GM12878 (cell line): ENCODE measurements at regions of chr3 and their contacts with region 1.

Region 1: GRCh38 chr3:29409409-29409808 is 128.5 kb downstream of the RBMS3 start:
- DNase-seq: no peak
- ATAC-seq: no peak
- H3K4me3 ChIP-seq: no peak overlapping the region
- H3K27ac ChIP-seq: no peak overlapping the region
- H3K4me1 ChIP-seq: peaks cover 6% of the 10 kb centered on the region
- H3K27me3 ChIP-seq: no peaks in the 10 kb centered on the region
- CTCF ChIP-seq: no peak
- EP300 ChIP-seq: no peak
- POLR2A ChIP-seq: no peak
- RAD21 ChIP-seq: no peak

Region 2: DNA sequence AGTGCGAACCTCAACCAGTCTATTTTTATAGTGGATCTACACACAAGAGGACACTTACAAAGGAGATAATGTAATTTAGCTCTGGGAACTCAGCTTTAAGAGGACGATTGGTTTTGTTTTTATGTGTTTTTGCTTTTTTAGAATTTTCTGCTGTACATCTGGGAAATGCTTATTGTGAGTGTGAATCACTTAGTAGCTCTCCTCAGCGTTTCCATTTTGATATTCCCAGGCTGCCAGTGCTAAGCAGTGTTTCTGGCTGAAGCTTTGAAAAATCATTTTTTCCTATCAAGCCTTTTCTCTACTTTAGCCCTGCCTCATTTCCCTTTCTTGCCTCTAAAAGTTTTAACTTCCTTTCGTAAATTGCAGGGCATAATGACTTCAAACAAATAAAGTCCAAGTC is 10.6 kb before region 1 on chr3:
- CTCF ChIA-PET with region 1: interaction called, 3 read pairs
- POLR2A ChIA-PET with region 1: interaction called, 9 read pairs
- RAD21 ChIA-PET with region 1: interaction called, 3 read pairs
- SMC1A ChIA-PET with region 1: interaction called, 14 read pairs
- in situ Hi-C with region 1: no loop called
- intact Hi-C with region 1: no loop called
- DNase-seq: no peak
- ATAC-seq: no peak
- H3K4me3 ChIP-seq: no peak overlapping the region
- H3K27ac ChIP-seq: no peak overlapping the region
- H3K4me1 ChIP-seq: no peaks in the 10 kb centered on the region
- H3K27me3 ChIP-seq: no peaks in the 10 kb centered on the region
- CTCF ChIP-seq: no peak
- EP300 ChIP-seq: no peak
- POLR2A ChIP-seq: no peak
- RAD21 ChIP-seq: no peak